Sciatic nerve (tissue), 2 donors: ENCODE measurements at regions of chr13 and their contacts with region 1.

Region 1: DNA sequence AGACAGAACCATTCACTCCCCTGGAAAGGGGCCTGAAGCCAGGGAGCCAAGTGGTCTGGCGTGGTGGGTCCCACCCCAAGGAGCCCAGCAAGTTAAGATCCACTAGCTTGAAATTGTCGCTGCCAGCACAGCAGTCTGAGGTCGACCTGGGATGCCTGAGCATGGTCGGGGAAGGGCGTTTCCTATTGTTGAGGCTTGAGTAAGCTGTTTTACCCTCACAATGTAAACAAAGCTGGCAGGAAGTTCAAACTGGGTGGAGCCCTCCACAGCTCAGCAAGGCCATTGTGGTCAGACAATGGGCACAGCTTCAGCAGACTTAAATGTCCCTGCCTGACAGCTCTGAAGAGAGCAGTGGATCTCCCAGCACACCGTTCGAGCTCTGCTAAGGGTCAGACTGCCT is 195.6 kb upstream of the DACH1 start:
- DNase-seq: no peak
- ATAC-seq: no peak

Region 2: GRCh38 chr13:72043366-72043765 is 19.2 kb before region 1 on chr13:
- intact Hi-C with region 1: loop called (anchors 1 kb)
- DNase-seq: no peak
- ATAC-seq: no peak